Activated CD4-positive, alpha-beta T cell treated with anti-CD3 and anti-CD28 coated beads, Interleukin-2, amount 10 ng/mL, durations not matched to agents 24 days and 14 days (primary cell): ENCODE measurements at regions of chr7 and their contacts with region 1.

Region 1: DNA sequence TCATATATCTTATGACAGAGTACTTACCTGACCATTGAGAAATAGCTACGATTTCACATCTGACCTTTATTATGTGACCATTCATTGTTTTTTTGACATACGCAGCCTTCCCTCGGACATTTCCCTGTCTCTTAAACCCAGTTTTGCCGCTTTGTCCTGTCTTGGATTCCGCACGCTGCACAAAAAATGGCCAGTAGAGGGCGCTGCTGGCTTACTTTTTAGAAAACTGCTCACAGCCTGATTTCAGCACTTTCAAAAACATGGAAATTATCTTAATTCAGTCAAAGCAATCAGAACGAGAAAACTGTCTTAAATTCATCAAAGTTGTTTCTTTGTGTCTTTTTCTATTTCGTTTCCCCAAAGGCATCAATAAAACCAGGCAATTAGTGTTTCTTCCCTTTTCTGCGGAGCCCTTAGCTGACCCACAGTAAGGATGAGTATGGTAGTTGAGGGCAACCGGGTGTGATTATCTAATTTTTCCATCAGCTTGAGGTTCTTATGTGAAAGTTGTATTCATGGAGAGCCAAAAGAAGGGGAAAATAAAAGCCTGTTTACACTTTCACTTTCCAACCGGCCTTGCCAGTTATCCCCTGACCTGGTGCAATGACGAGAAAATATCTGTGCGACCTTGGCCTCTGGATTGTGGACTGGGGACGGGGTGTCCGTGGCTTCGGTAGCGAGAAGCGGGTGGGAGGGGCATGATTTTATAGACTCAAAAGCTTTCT is 144.4 kb downstream of the DYNC1I1 start:
- DNase-seq: peak; percentile 90
- H3K4me3 Mint-ChIP-seq: no peak overlapping the region
- H3K27ac Mint-ChIP-seq: no peak overlapping the region
- H3K4me1 Mint-ChIP-seq: peaks cover 7% of the 10 kb centered on the region
- H3K27me3 Mint-ChIP-seq: peaks cover 15% of the 10 kb centered on the region

Region 2: DNA sequence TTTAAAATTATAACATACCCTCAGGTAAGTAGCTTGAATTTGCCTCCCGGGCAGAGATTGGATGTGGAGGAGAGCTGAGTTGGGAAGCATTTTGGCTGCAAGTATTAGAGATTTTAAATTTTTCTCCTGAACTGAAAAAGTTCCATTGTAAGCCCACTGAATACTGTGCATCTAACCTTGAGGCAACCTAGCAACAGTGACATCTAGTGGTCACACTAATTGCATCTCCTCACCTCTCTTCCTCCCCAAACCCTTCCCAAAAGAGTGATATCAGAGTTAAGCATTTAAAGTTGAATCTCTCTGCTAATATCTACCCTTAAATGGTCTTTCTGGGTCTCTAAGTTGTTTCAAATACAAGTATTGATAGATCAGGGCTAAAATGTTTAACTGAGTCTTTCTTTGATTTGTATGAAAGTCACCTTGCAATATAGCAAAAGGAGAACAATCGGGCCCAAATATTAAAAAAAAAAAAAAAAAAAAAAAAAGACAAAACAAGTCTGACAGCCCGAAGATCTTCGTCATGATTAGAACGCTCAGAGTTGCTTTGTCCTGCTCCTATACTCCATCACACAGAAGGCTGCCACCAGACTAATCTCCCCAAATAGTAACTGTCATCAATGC is 1148.3 kb after region 1 on chr7:
- intact Hi-C with region 1: loop called (anchors 2 kb)
- DNase-seq: peak; percentile 73
- H3K4me3 Mint-ChIP-seq: no peak overlapping the region
- H3K27ac Mint-ChIP-seq: no peak overlapping the region
- H3K4me1 Mint-ChIP-seq: no peaks in the 10 kb centered on the region
- H3K27me3 Mint-ChIP-seq: peaks cover 15% of the 10 kb centered on the region

Region 3: GRCh38 chr7:97179454-97180104 is 1262.8 kb after region 1 on chr7:
- intact Hi-C with region 1: loop called (anchors 10 kb)
- DNase-seq: peak; percentile 81
- H3K4me3 Mint-ChIP-seq: no peak overlapping the region
- H3K27ac Mint-ChIP-seq: no peak overlapping the region
- H3K4me1 Mint-ChIP-seq: no peaks in the 10 kb centered on the region
- H3K27me3 Mint-ChIP-seq: no peaks in the 10 kb centered on the region

Region 4: GRCh38 chr7:97835296-97836138 is 1918.8 kb after region 1 on chr7:
- intact Hi-C with region 1: loop called (anchors 5 kb)
- DNase-seq: peak; percentile 86
- H3K4me3 Mint-ChIP-seq: no peak overlapping the region
- H3K27ac Mint-ChIP-seq: no peak overlapping the region
- H3K4me1 Mint-ChIP-seq: no peaks in the 10 kb centered on the region
- H3K27me3 Mint-ChIP-seq: peaks cover 39% of the 10 kb centered on the region